Adrenal gland (tissue), 19 donors: ENCODE measurements at regions of chr2 and their contacts with region 1.

Region 1: DNA sequence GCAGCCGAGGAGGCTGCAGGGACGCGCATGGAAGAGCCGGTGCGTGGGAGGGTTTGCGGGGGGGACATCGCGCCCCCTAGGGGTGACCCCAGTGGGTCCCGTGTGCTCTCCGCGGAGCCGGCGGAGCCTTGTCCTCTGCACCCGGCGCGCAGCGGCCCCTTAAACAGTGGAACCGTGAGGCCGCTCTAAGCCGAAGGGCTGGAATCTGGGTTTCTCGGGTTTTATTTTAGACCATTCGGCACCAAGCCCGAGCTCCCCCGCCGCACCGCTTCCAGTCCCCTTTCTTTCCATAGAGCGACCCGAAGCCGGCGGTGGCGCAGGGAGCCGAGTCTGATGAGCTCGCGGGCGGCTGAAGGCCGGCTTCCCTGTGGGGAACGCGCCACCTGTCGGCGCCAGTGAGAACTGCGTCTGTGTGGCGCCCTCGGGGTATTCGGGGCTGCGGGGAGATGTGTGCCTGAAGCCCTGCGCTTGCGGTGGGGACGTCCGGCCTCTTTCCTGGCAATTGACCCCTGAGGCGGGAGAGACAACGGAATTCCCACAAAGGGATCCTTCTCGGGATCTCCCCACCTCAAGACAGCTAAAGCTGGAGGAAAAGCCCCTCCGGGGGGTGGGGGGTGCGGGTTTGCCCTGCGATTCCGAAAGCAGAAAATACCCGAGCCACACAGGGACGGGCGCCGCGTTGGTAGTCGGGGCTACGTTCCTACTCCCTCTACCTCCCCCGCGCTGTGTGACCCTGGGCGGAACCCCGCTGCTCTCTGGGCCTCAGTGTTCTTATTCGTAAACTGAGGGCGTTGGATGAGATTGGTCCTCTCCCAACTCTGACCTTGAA is 8.2 kb upstream of the EN1 start:
- DNase-seq: peak; percentile 66 to 86 (median 80)
- H3K4me3 ChIP-seq: peak overlapping the region in 1 of 4 donors; percentile 46
- H3K27ac ChIP-seq: no peak overlapping the region
- H3K4me1 ChIP-seq: peaks cover 0 to 13% of the 10 kb centered on the region in 2 donors
- H3K27me3 ChIP-seq: peaks cover 93% of the 10 kb centered on the region
- CTCF ChIP-seq: peak; percentile 85 to 97 (median 95)
- POLR2A ChIP-seq: no peak

Region 2: GRCh38 chr2:118046634-118047210 is 808.9 kb before region 1 on chr2:
- intact Hi-C with region 1: loop called (anchors 5 to 10 kb)
- DNase-seq: no peak
- H3K4me3 ChIP-seq: no peak overlapping the region
- H3K27ac ChIP-seq: no peak overlapping the region
- H3K4me1 ChIP-seq: no peaks in the 10 kb centered on the region
- H3K27me3 ChIP-seq: peaks cover 22% of the 10 kb centered on the region
- CTCF ChIP-seq: peak; percentile 23 to 68 (median 60)
- POLR2A ChIP-seq: no peak

Region 3: DNA sequence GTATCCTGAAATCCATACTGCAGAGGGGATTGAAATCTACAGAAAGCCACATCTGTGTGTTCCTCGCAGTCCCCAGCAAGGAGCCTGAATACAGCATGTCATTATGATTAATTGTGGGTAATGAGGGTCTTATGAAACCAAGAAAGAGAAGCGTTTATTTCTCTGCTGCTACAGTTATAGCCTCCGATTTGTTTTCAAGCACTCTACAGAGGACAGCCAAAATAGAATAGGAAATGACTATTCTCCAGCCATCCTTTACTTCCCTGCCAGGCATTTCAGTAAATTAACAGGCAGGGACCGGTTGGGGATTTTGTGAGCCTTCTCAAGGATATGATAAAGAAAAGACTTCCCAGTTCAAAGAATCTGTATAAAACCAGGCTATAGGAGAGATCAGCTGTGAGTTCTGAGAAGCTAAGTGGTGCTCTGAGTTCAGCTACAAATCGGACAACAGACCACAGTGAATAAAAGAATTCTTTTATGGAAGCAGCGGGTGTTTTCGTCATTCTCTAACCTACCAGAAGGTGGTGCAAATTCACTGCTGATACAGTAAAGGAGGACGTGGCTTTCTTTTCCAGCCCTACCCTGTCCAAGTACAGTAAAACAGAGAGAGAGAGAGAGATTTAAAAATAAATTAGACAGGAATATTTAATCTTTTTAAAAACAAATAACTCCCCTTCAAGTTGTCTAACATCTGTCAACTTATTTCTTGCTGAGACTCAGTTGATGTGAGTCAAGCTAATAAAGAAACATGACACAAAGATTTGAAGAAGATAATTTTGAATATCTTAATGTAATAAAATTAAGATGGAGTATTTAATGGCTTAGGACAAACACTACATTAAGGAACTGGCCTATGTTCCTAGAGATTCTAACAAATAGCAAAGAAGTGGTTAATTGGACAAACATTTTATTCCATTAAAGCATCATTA is 633.7 kb before region 1 on chr2:
- intact Hi-C with region 1: loop called (anchors 5 kb)
- DNase-seq: peak; percentile 31 to 60 (median 43)
- H3K4me3 ChIP-seq: no peak overlapping the region
- H3K27ac ChIP-seq: no peak overlapping the region
- H3K4me1 ChIP-seq: peaks cover 0 to 14% of the 10 kb centered on the region in 2 donors
- H3K27me3 ChIP-seq: peaks cover 72% of the 10 kb centered on the region
- CTCF ChIP-seq: peak; percentile 57 to 76 (median 68)
- POLR2A ChIP-seq: no peak

Region 4: GRCh38 chr2:118539290-118539689 is 316.4 kb before region 1 on chr2:
- intact Hi-C with region 1: loop called in 1 of 2 experiments (anchors 5 kb)
- DNase-seq: peak in 6 of 7 donors; percentile 17 to 54 (median 30)
- H3K4me3 ChIP-seq: no peak overlapping the region
- H3K27ac ChIP-seq: no peak overlapping the region
- H3K4me1 ChIP-seq: no peaks in the 10 kb centered on the region
- H3K27me3 ChIP-seq: no peaks in the 10 kb centered on the region
- CTCF ChIP-seq: peak in 2 of 6 experiments; percentile 17 to 24
- POLR2A ChIP-seq: no peak

Region 5: DNA sequence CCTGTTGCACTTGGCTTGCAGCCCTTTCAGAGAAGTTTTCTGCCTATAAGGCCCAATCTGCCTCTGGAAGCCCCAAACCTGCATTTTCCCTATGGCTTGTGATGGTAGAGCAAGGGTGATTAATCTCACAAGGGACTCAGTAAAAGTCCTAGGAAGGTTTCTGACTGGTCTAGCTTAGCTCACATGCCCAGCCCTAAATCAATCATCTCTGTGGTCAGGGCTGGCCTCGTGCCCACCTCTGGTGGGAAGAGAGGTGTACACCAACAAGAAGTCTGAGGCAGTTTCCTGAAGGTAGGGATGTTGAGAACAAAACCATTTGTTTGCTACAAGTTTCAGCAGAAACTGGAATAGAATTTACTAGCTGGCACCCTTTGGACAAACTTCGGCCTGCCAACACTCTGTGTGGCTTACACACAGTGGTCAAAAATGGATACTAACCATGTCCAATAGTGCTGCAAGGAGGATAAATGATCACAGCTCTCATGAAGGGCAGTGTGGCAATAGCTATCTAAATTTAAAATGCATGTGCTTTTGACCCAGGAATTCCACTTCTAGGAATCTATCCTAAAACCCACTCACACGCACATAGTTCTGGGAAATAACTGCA is 104.6 kb before region 1 on chr2:
- intact Hi-C with region 1: loop called in 1 of 2 experiments (anchors 10 kb)
- DNase-seq: no peak
- H3K4me3 ChIP-seq: no peak overlapping the region
- H3K27ac ChIP-seq: no peak overlapping the region
- H3K4me1 ChIP-seq: no peaks in the 10 kb centered on the region
- H3K27me3 ChIP-seq: no peaks in the 10 kb centered on the region
- CTCF ChIP-seq: no peak
- POLR2A ChIP-seq: no peak

Region 6: GRCh38 chr2:118808429-118808809 is 47.2 kb before region 1 on chr2:
- intact Hi-C with region 1: no loop called
- DNase-seq: no peak
- H3K4me3 ChIP-seq: no peak overlapping the region
- H3K27ac ChIP-seq: no peak overlapping the region
- H3K4me1 ChIP-seq: no peaks in the 10 kb centered on the region
- H3K27me3 ChIP-seq: peaks cover 16% of the 10 kb centered on the region
- CTCF ChIP-seq: no peak
- POLR2A ChIP-seq: no peak